Right ventricle myocardium inferior (tissue), 1 donor: ENCODE measurements at regions of chr10 and their contacts with region 1.

Region 1: GRCh38 chr10:125337510-125337909 is 177.1 kb upstream of the CTBP2 start:
- DNase-seq: no peak
- ATAC-seq: no peak

Region 2: DNA sequence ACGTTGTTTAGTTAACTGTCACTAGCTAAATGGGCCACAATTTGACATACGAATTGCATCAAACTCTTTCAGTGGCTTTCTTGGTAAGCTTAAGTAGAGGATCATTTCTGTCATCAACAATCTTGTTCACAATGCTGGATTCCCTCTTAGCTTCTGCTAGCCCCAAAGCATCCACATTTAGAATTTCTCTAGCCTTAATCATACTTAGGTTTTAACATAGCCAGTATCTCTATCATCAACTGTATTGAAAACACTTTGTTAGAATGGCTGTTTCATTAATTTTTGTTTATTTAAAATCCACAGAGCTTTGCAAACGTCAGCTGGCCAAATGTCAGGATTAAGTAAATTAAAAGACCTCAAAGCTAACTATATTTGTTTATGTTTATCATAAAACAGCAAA is 494.8 kb before region 1 on chr10:
- intact Hi-C with region 1: no loop called
- DNase-seq: no peak
- ATAC-seq: no peak

Region 3: GRCh38 chr10:124992462-124993344 is 344.8 kb before region 1 on chr10:
- intact Hi-C with region 1: loop called (anchors 10 kb)
- DNase-seq: no peak
- ATAC-seq: peak; percentile 76

Region 4: DNA sequence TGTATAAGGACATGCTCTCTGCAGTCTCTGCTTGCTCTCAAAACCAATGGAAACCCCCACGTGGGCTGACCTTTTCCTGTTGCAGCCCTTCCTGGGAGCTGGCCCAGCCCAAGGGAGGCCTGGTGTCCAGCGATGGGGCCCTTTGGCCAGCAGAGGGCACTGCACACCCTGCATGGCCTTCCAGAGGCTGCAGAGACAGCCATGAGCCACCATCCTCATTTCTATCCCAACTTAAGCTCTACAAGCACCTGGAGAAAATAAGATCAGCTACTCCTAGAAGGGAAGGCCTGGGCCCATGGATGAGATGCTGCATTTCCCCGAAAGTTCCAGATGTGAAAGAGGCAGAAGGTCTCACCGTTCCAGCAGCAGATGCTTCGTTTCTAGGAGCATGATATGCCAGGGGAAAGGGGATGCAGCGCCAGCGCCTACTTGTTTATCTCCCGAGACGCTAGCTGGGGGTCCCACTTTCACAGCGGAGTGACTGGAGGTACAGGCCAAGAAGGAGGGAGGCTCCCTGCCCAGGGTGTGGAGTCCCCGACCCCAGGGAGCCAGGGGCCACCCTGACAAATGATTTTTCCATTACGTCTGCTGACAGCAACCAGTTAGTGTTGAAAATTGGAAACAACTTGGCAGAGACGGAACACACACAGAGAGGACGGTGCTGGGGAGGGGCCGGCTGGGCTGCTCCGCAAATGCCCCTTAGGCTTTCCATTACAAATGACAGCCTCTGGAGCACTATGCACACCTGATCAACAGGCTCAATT is 289.2 kb before region 1 on chr10:
- intact Hi-C with region 1: loop called (anchors 5 kb)
- DNase-seq: peak; percentile 92
- ATAC-seq: peak; percentile 87

Region 5: DNA sequence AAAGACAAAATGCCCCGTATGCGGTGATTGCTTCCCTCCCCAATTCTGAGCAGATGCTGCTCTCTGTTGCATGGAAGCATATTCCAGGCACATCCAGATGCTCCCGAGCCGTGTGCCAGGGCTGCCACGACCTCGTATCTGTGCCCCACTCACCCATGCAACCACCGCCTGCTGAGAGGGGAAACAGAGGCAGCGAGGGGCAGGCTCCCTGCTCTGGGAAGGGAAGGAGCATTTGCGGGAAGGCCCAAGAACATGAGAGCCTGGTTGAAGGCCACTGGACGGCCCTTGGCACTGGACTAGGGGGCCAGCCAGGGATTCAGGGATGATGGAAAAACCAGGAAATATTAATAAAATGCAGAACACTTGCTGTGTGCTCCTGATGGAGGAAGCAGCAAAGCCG is 266.5 kb before region 1 on chr10:
- intact Hi-C with region 1: no loop called
- DNase-seq: no peak
- ATAC-seq: no peak

Region 6: DNA sequence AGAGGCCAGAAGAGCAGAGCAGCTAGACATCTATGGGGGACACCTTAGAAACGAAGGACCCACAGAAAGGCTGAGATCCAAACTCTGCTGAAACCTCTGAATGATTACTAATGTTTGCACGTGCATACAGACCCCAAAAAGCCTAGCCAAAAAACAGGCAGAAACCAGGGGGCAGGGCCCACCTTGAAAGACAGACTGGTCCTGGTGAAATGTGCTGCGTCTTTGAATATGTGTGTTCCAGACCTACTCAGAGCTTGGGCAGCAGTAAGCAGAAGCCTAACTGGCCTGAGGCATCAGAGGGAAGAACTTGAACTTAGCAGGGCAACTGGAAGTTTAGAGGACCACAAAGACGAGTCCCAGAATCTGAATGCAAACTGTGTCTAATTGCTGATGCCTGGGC is 93.6 kb after region 1 on chr10:
- intact Hi-C with region 1: no loop called
- DNase-seq: no peak
- ATAC-seq: no peak